SK-N-SH (cell line): ENCODE measurements at regions of chr13 and their contacts with region 1.

Region 1: GRCh38 chr13:33817513-33817900 is 442 bp upstream of the RFC3 start:
- DNase-seq: peak; percentile 10
- H3K4me3 ChIP-seq: peak overlapping the region; percentile 61 to 95
- H3K27ac ChIP-seq: peak overlapping the region; percentile 68 to 88
- H3K4me1 ChIP-seq: peaks cover 0 to 3% of the 10 kb centered on the region in 2 experiments; a peak in 2 of 4 replicates
- H3K27me3 ChIP-seq: no peaks in the 10 kb centered on the region
- CTCF ChIP-seq: no peak
- EP300 ChIP-seq: no peak
- RAD21 ChIP-seq: no peak

Region 2: DNA sequence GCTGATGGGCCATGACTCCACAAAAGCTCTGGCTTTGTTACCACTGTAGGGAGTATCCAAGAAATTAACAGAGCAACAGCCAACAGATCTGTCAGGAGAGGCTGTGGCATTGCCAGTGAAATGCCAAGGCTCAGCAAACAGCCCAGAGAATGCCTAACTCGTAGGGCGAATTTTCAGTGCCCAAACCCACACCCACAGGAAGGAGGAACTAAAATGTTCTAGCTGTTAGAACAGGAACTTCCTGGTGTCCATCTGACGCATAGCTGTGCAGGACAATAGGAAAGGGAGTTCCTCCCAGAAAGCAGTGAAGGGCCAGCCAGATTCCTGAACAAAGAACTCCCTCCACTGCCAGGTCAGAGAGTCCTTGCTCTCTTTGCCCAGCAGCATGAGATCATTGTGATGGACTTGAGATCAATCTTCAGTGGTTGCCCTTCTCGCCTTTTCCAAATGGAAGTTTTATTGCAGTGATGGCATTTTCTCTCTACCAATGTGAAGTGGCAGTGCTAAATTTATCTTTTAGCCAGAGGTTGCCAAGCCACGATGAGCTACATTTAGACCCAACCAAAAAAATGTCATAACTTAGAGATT is 307.8 kb before region 1 on chr13:
- CTCF ChIA-PET with region 1: no interaction called
- POLR2A ChIA-PET with region 1: no interaction called
- DNase-seq: no peak
- H3K4me3 ChIP-seq: no peak overlapping the region
- H3K27ac ChIP-seq: peak overlapping the region in 1 of 2 experiments; percentile 74; a peak in 3 of 4 replicates
- H3K4me1 ChIP-seq: peaks cover 0 to 13% of the 10 kb centered on the region in 2 experiments; a peak in 2 of 4 replicates
- H3K27me3 ChIP-seq: no peaks in the 10 kb centered on the region
- CTCF ChIP-seq: no peak
- EP300 ChIP-seq: no peak
- RAD21 ChIP-seq: no peak

Region 3: GRCh38 chr13:33799950-33800592 is 17.4 kb before region 1 on chr13:
- CTCF ChIA-PET with region 1: interaction called, 10 read pairs
- POLR2A ChIA-PET with region 1: no interaction called
- DNase-seq: peak; percentile 19
- H3K4me3 ChIP-seq: no peak overlapping the region
- H3K27ac ChIP-seq: no peak overlapping the region
- H3K4me1 ChIP-seq: no peaks in the 10 kb centered on the region; a peak in 1 of 4 replicates
- H3K27me3 ChIP-seq: no peaks in the 10 kb centered on the region
- CTCF ChIP-seq: peak; percentile 57
- EP300 ChIP-seq: no peak
- RAD21 ChIP-seq: peak; percentile 72